PC-3 (cell line): ENCODE measurements at regions of chr17 and their contacts with region 1.

Region 1: GRCh38 chr17:70499067-70499786 is 329.9 kb downstream of the KCNJ2 start:
- DNase-seq: no peak
- ATAC-seq: no peak
- H3K4me3 ChIP-seq: no peak overlapping the region
- H3K27ac ChIP-seq: no peak overlapping the region
- H3K4me1 ChIP-seq: no peaks in the 10 kb centered on the region
- H3K27me3 ChIP-seq: peaks cover 60% of the 10 kb centered on the region
- CTCF ChIP-seq: no peak

Region 2: DNA sequence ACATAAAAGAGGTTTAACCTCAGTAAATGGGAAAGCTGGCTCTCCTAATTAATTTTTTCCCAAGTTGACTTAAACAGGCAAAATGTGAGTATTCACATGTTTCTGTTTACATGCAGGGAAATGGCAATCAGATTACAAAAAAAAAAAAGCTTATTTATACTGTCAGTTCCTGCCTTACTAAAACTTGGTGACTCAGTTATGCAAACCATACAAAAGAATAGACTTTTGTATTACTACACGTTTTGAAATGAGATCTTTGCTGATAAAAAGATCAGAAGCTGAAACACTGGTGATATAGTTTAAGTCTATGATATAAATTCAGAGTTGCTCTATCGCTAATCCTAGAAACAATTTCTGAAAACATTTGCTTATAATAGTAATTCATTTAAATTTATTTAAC is 339.2 kb before region 1 on chr17:
- CTCF ChIA-PET with region 1: interaction called, 12 read pairs
- POLR2A ChIA-PET with region 1: no interaction called
- intact Hi-C with region 1: no loop called
- DNase-seq: peak; percentile 83
- ATAC-seq: peak; percentile 86
- H3K4me3 ChIP-seq: no peak overlapping the region
- H3K27ac ChIP-seq: no peak overlapping the region
- H3K4me1 ChIP-seq: peaks cover 17% of the 10 kb centered on the region
- H3K27me3 ChIP-seq: no peaks in the 10 kb centered on the region
- CTCF ChIP-seq: no peak

Region 3: GRCh38 chr17:70278844-70279462 is 220.3 kb before region 1 on chr17:
- CTCF ChIA-PET with region 1: no interaction called
- POLR2A ChIA-PET with region 1: no interaction called
- intact Hi-C with region 1: loop called (anchors 10 kb)
- DNase-seq: no peak
- ATAC-seq: no peak
- H3K4me3 ChIP-seq: no peak overlapping the region
- H3K27ac ChIP-seq: no peak overlapping the region
- H3K4me1 ChIP-seq: no peaks in the 10 kb centered on the region
- H3K27me3 ChIP-seq: peaks cover 6% of the 10 kb centered on the region; the same call in 1 of the 2 replicates
- CTCF ChIP-seq: no peak

Region 4: DNA sequence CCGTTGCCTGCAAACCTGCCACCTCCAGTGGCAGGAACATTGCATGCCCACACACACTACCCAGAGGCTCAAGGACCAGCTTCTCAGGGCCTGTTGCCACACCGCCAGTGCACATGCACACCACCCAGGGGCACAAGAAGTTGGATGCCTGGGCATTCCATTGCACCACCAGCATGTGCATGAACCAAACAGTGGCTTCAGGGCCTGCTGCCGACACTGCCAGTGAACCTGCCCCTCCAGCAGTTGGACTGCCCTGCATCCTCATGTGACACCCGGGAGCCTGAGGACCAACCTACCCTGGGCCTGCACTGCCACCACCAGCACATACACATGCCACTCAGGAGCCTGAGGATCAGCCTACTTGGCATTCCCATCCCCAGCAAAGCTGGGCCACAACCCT is 26.2 kb before region 1 on chr17:
- CTCF ChIA-PET with region 1: no interaction called
- POLR2A ChIA-PET with region 1: no interaction called
- intact Hi-C with region 1: no loop called
- DNase-seq: no peak
- ATAC-seq: no peak
- H3K4me3 ChIP-seq: no peak overlapping the region
- H3K27ac ChIP-seq: no peak overlapping the region
- H3K4me1 ChIP-seq: no peaks in the 10 kb centered on the region
- H3K27me3 ChIP-seq: peaks cover 6% of the 10 kb centered on the region; the same call in 1 of the 2 replicates
- CTCF ChIP-seq: no peak